CD4-positive, alpha-beta T cell (primary cell): ENCODE measurements at regions of chr16 and their contacts with region 1.

Region 1: GRCh38 chr16:57601801-57602478 is 26.5 kb upstream of the ADGRG1 start:
- DNase-seq: peak in 6 of 14 experiments; percentile 25 to 88 (median 68)
- ATAC-seq: peak; percentile 92
- H3K4me3 ChIP-seq: no peak overlapping the region
- H3K4me3 Mint-ChIP-seq: peak overlapping the region; percentile 36
- H3K27ac ChIP-seq: peak overlapping the region; percentile 25 to 59
- H3K27ac Mint-ChIP-seq: peak overlapping the region; percentile 88
- H3K4me1 ChIP-seq: peaks cover 41% of the 10 kb centered on the region
- H3K4me1 Mint-ChIP-seq: peaks cover 26% of the 10 kb centered on the region
- H3K27me3 ChIP-seq: no peaks in the 10 kb centered on the region
- H3K27me3 Mint-ChIP-seq: no peaks in the 10 kb centered on the region
- CTCF ChIP-seq: no peak

Region 2: GRCh38 chr16:57284208-57284951 is 317.6 kb before region 1 on chr16 and contains the start of gene PLLP:
- CTCF ChIA-PET with region 1: no interaction called
- POLR2A ChIA-PET with region 1: no interaction called
- intact Hi-C with region 1: no loop called
- DNase-seq: peak in 11 of 14 experiments; percentile 17 to 72 (median 43)
- ATAC-seq: peak; percentile 73
- H3K4me3 ChIP-seq: peak within 1 kb of the TSS; percentile 64
- H3K4me3 Mint-ChIP-seq: peak within 1 kb of the TSS; percentile 89
- H3K27ac ChIP-seq: no peak within 1 kb of the TSS
- H3K27ac Mint-ChIP-seq: peak within 1 kb of the TSS; percentile 49
- H3K4me1 ChIP-seq: peaks cover 37% of the 10 kb centered on the region
- H3K4me1 Mint-ChIP-seq: peaks cover 38% of the 10 kb centered on the region
- H3K27me3 ChIP-seq: peaks cover 4 to 5% of the 10 kb centered on the region in 2 experiments
- H3K27me3 Mint-ChIP-seq: peaks cover 4% of the 10 kb centered on the region
- CTCF ChIP-seq: no peak
- total RNA-seq, gene PLLP: 1.8 to 2.5 TPM

Region 3: DNA sequence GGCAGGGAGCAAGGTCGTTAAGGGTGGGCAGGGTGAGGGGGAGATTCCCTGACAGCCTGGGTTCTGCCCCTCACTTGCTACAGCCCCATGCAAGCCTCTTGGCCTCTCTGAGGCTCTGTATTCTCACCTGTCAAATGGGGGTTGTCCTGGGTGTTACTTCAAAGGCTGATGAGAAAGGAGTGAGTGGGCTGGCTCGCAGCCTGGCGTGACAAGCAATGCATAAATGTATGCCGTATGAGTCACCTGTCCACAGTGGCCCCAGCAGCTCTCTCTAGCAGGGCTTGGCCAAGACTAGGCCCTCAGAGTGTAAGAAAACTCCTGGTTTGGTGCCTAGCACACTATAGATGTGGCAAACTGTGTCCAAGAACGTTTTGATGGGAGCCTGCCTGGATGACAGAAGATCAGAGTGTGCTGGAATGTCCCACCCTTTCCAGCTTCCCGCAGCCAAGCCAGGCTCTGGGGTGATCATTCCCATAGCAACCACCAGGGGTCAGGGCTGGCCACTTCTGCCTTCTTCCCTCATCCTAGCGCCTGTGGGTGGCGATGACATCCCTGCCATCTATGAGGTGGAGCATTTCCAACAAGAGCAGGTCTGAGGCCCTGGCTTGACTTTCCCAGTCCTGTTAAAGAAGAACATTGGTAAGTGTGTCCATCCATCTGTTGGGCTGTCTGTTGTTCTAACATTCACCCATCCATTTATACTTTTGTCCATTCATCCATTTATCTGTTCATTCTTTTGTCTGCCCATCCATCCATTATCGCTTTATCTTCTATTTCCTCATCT is 10.7 kb before region 1 on chr16:
- CTCF ChIA-PET with region 1: interaction called, 6 read pairs
- POLR2A ChIA-PET with region 1: interaction called, 15 read pairs
- intact Hi-C with region 1: loop called in 1 of 2 experiments (anchors 1 kb)
- DNase-seq: peak; percentile 40 to 81 (median 52)
- ATAC-seq: peak; percentile 45
- H3K4me3 ChIP-seq: no peak overlapping the region
- H3K4me3 Mint-ChIP-seq: peak overlapping the region; percentile 57
- H3K27ac ChIP-seq: no peak overlapping the region
- H3K27ac Mint-ChIP-seq: peak overlapping the region; percentile 70
- H3K4me1 ChIP-seq: peaks cover 32% of the 10 kb centered on the region
- H3K4me1 Mint-ChIP-seq: peaks cover 42% of the 10 kb centered on the region
- H3K27me3 ChIP-seq: no peaks in the 10 kb centered on the region
- H3K27me3 Mint-ChIP-seq: no peaks in the 10 kb centered on the region
- CTCF ChIP-seq: peak; percentile 83

Region 4: DNA sequence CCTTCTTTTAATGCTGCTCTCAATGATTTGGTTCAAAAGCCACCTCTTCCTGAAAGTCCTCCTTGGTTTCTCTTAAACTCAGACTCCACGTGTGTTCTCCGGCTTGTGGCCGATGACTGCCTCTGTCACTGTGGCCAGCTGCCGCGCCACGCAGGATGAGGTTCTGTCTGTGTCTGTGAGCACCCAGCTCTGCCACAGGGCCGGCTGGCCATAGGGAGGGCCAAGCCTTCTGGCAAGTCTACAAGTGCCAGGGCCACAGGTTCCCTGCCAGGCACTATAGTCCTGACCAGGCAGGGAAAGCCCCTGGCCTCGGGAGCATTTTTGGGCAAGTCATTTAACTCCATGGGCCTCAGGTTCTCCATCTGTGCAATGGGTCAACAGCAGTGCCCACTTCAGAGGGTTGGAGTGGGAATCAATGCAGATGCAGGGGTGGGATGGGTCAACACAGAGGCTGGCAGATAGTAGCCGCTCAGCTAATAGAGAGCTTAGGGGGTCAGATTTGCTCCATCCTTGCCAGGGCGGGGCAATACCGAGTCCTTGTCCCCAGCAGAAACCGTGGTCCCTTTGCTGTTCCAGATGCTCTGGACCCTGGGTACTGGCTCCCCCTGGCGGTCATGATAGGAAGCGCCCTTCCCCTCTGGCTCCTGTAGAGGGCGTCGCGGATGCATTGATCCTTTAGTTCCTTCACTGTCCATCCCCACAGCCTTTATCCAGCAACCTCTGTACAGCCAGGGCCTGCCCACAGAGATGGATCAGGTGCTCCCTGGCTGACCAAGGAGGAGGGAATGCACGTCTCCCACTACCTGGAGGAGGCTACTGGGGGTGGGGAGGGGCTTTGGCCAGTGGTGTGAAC is 46.9 kb after region 1 on chr16:
- CTCF ChIA-PET with region 1: interaction called, 4 read pairs
- POLR2A ChIA-PET with region 1: interaction called, 4 read pairs
- intact Hi-C with region 1: loop called in 1 of 2 experiments (anchors 2 kb)
- DNase-seq: peak; percentile 68 to 89 (median 82)
- ATAC-seq: peak; percentile 92
- H3K4me3 ChIP-seq: no peak overlapping the region
- H3K4me3 Mint-ChIP-seq: no peak overlapping the region
- H3K27ac ChIP-seq: no peak overlapping the region
- H3K27ac Mint-ChIP-seq: no peak overlapping the region
- H3K4me1 ChIP-seq: peaks cover 50% of the 10 kb centered on the region
- H3K4me1 Mint-ChIP-seq: peaks cover 27% of the 10 kb centered on the region
- H3K27me3 ChIP-seq: no peaks in the 10 kb centered on the region
- H3K27me3 Mint-ChIP-seq: no peaks in the 10 kb centered on the region
- CTCF ChIP-seq: peak; percentile 100